Activated CD4-positive, alpha-beta T cell treated with anti-CD3 and anti-CD28 coated beads for 36 hours (primary cell): ENCODE measurements at regions of chr11 and their contacts with region 1.

Region 1: DNA sequence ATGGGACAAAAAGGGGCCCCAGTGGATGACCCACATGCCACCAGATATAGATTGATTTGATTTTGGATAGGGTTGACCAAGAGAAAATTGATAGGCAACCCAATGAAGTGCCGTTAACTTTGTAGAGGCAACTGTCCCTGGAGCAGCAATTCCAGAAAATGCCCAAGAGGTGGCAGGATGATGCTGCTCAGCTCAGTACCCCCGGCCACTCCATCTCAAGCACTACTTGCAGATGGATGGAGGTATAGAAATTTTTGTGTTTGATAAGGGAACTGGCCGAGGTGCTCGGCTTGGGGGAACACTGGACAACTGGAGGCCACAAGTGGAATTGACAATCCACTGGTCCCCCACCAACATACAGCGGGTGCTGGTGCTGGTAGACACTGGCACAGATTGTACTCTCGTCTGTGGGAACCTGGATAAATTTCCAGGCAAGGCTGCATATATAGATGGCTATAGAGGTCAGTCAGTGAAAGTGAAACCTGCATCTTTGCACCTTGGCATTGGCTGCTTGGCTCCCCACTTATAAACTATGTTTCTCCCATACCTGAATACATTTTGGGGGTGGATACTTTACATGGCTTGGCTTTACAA is 86.3 kb downstream of the CCDC83 start:
- DNase-seq: peak; percentile 73
- ATAC-seq: peak; percentile 72
- H3K4me3 Mint-ChIP-seq: no peak overlapping the region
- H3K27ac Mint-ChIP-seq: no peak overlapping the region
- H3K4me1 Mint-ChIP-seq: peaks cover 18% of the 10 kb centered on the region
- H3K27me3 Mint-ChIP-seq: no peaks in the 10 kb centered on the region

Region 2: DNA sequence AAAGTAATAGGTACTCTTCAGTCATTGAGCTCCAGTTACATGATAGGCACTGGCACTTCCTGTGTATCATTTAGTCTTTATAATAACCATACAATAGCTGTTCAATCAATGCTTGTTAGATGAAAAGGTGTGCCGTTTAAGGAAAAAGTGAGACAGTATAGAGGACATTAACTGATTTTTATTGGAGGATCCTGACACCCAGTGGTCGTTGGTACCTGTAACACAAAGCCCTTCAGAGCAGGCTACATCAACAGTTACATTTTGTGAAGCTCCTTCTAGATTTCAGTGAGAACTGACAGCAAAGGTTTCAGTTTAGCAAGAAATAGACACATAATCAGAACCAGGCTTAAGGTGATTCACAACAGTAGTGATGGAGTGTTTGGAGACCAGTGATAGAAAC is 477.4 kb after region 1 on chr11:
- CTCF ChIA-PET with region 1: no interaction called
- POLR2A ChIA-PET with region 1: no interaction called
- intact Hi-C with region 1: loop called (anchors 2 to 10 kb)
- DNase-seq: peak; percentile 19
- ATAC-seq: peak; percentile 83
- H3K4me3 Mint-ChIP-seq: no peak overlapping the region
- H3K27ac Mint-ChIP-seq: no peak overlapping the region
- H3K4me1 Mint-ChIP-seq: peaks cover 10% of the 10 kb centered on the region
- H3K27me3 Mint-ChIP-seq: no peaks in the 10 kb centered on the region

Region 3: GRCh38 chr11:86818466-86819192 is 877.2 kb after region 1 on chr11:
- CTCF ChIA-PET with region 1: no interaction called
- POLR2A ChIA-PET with region 1: no interaction called
- intact Hi-C with region 1: loop called in 1 of 2 experiments (anchors 1 kb)
- DNase-seq: no peak
- ATAC-seq: no peak
- H3K4me3 Mint-ChIP-seq: no peak overlapping the region
- H3K27ac Mint-ChIP-seq: no peak overlapping the region
- H3K4me1 Mint-ChIP-seq: peaks cover 6% of the 10 kb centered on the region
- H3K27me3 Mint-ChIP-seq: peaks cover 27% of the 10 kb centered on the region

Region 4: GRCh38 chr11:87870086-87870485 is 1928.6 kb after region 1 on chr11:
- CTCF ChIA-PET with region 1: no interaction called
- POLR2A ChIA-PET with region 1: no interaction called
- intact Hi-C with region 1: no loop called
- DNase-seq: no peak
- ATAC-seq: no peak
- H3K4me3 Mint-ChIP-seq: no peak overlapping the region
- H3K27ac Mint-ChIP-seq: no peak overlapping the region
- H3K4me1 Mint-ChIP-seq: no peaks in the 10 kb centered on the region
- H3K27me3 Mint-ChIP-seq: no peaks in the 10 kb centered on the region